CD8-positive, alpha-beta T cell (primary cell): ENCODE measurements at regions of chr5 and their contacts with region 1.

Region 1: DNA sequence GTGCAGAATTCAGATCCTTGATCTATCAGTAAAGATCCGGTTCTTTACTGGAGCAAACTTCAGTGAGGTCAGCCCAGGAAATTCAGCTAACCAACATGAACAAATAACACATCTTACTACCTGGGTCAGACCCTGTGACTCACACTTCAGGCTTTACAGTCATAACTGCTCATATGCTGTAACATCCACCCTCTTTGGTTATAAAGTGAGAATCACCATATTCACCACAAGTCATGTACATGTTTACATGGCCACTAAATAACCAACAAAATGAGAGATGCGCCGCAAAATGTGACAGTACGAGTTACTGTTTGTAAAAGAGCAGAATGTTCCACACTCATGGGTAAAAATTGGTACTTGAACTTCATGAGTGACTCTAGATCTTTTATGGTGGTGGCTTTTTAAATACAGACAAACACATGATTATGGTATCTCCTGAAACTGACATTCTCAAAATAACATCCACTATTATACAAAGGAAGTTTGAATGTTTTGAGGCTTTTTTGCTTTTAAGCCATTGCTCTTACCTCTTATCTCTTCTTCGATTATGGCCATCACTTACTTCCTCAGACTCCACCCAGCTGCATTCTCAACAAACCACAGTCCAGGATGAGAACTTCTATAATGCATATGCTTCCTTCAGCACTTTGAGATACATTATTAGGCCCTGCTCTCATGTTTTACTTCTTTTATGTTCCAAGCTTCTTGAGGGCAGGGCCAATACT is 516.6 kb downstream of the RAB3C start:
- DNase-seq: peak in 7 of 9 experiments; percentile 18 to 92 (median 45)
- ATAC-seq: peak; percentile 93
- H3K4me3 ChIP-seq: no peak overlapping the region
- H3K4me3 Mint-ChIP-seq: no peak overlapping the region
- H3K27ac ChIP-seq: peak overlapping the region in 1 of 2 experiments; percentile 79
- H3K27ac Mint-ChIP-seq: peak overlapping the region; percentile 60
- H3K4me1 ChIP-seq: peaks cover 12% of the 10 kb centered on the region
- H3K4me1 Mint-ChIP-seq: peaks cover 29% of the 10 kb centered on the region
- H3K27me3 ChIP-seq: no peaks in the 10 kb centered on the region
- H3K27me3 Mint-ChIP-seq: no peaks in the 10 kb centered on the region
- CTCF ChIP-seq: no peak

Region 2: GRCh38 chr5:57754616-57755015 is 1344.8 kb before region 1 on chr5:
- CTCF ChIA-PET with region 1: no interaction called
- POLR2A ChIA-PET with region 1: no interaction called
- intact Hi-C with region 1: no loop called
- DNase-seq: no peak
- ATAC-seq: no peak
- H3K4me3 ChIP-seq: no peak overlapping the region
- H3K4me3 Mint-ChIP-seq: no peak overlapping the region
- H3K27ac ChIP-seq: no peak overlapping the region
- H3K27ac Mint-ChIP-seq: no peak overlapping the region
- H3K4me1 ChIP-seq: no peaks in the 10 kb centered on the region
- H3K4me1 Mint-ChIP-seq: no peaks in the 10 kb centered on the region
- H3K27me3 ChIP-seq: no peaks in the 10 kb centered on the region
- H3K27me3 Mint-ChIP-seq: no peaks in the 10 kb centered on the region
- CTCF ChIP-seq: no peak

Region 3: GRCh38 chr5:59079622-59080620 is 19.5 kb before region 1 on chr5:
- CTCF ChIA-PET with region 1: interaction called, 3 read pairs
- POLR2A ChIA-PET with region 1: no interaction called
- intact Hi-C with region 1: loop called in 1 of 2 experiments (anchors 2 kb)
- DNase-seq: no peak
- ATAC-seq: no peak
- H3K4me3 ChIP-seq: no peak overlapping the region
- H3K4me3 Mint-ChIP-seq: no peak overlapping the region
- H3K27ac ChIP-seq: no peak overlapping the region
- H3K27ac Mint-ChIP-seq: no peak overlapping the region
- H3K4me1 ChIP-seq: no peaks in the 10 kb centered on the region
- H3K4me1 Mint-ChIP-seq: no peaks in the 10 kb centered on the region
- H3K27me3 ChIP-seq: no peaks in the 10 kb centered on the region
- H3K27me3 Mint-ChIP-seq: no peaks in the 10 kb centered on the region
- CTCF ChIP-seq: no peak

Region 4: GRCh38 chr5:59115345-59115744 is 15.9 kb after region 1 on chr5:
- CTCF ChIA-PET with region 1: interaction called, 6 read pairs
- POLR2A ChIA-PET with region 1: interaction called, 3 read pairs
- intact Hi-C with region 1: loop called in 1 of 2 experiments (anchors 2 kb)
- DNase-seq: no peak
- ATAC-seq: no peak
- H3K4me3 ChIP-seq: no peak overlapping the region
- H3K4me3 Mint-ChIP-seq: no peak overlapping the region
- H3K27ac ChIP-seq: no peak overlapping the region
- H3K27ac Mint-ChIP-seq: no peak overlapping the region
- H3K4me1 ChIP-seq: no peaks in the 10 kb centered on the region
- H3K4me1 Mint-ChIP-seq: peaks cover 3% of the 10 kb centered on the region
- H3K27me3 ChIP-seq: no peaks in the 10 kb centered on the region
- H3K27me3 Mint-ChIP-seq: no peaks in the 10 kb centered on the region
- CTCF ChIP-seq: no peak

Region 5: GRCh38 chr5:59356813-59357380 is 257.5 kb after region 1 on chr5:
- CTCF ChIA-PET with region 1: no interaction called
- POLR2A ChIA-PET with region 1: no interaction called
- intact Hi-C with region 1: no loop called
- DNase-seq: peak in 2 of 9 experiments; percentile 29 to 41
- ATAC-seq: no peak
- H3K4me3 ChIP-seq: no peak overlapping the region
- H3K4me3 Mint-ChIP-seq: no peak overlapping the region
- H3K27ac ChIP-seq: peak overlapping the region in 1 of 2 experiments; percentile 9
- H3K27ac Mint-ChIP-seq: no peak overlapping the region
- H3K4me1 ChIP-seq: no peaks in the 10 kb centered on the region
- H3K4me1 Mint-ChIP-seq: no peaks in the 10 kb centered on the region
- H3K27me3 ChIP-seq: no peaks in the 10 kb centered on the region
- H3K27me3 Mint-ChIP-seq: peaks cover 11% of the 10 kb centered on the region
- CTCF ChIP-seq: no peak